Caco-2 (cell line): ENCODE measurements at regions of chr10 and their contacts with region 1.

Region 1: DNA sequence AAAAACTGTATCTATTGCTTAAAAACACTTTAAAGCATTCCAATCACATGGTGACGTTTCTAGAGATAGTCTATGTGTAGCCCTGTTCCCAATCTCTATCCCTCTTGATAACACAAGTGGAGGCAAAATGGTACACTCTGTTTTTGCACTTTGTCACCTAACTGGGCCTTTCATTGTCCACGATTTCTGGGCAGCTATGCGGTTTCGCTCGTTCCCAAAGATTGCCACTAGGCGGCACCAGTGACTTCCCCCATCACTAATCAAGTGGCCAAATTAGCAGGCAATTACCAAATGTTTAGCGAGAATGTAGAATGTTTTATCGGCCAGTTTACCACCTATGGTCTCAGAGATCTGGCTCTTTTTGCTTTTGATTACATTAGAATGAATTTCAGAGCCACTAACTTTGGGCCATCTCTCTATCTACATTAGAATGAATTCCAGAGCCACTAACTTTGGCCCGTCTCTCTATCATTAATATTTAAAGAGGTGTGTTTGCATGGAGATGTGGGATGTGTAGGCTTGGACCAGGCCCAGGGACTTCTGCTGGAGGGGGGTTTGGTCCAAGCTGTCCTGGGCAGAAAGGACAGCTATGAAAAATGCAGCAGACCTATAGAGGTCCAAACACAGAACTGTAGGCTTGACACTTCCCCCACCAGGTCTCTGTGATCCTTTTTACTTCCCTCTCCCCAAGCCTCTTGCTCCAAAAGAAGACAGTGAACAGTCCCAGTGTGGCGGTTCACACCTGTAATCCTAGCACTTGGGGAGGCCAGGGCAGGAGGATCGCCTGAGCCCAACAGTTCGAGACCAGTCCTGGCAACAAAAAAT is 90.1 kb downstream of the EPC1 start:
- DNase-seq: peak; percentile 54 to 66
- H3K4me3 ChIP-seq: no peak overlapping the region
- H3K4me3 Mint-ChIP-seq: no peak overlapping the region
- H3K27ac Mint-ChIP-seq: no peak overlapping the region
- H3K4me1 ChIP-seq: peaks cover 35% of the 10 kb centered on the region
- H3K4me1 Mint-ChIP-seq: peaks cover 26% of the 10 kb centered on the region
- H3K27me3 ChIP-seq: no peaks in the 10 kb centered on the region
- H3K27me3 Mint-ChIP-seq: no peaks in the 10 kb centered on the region
- CTCF ChIP-seq: peak; percentile 83 to 94

Region 2: DNA sequence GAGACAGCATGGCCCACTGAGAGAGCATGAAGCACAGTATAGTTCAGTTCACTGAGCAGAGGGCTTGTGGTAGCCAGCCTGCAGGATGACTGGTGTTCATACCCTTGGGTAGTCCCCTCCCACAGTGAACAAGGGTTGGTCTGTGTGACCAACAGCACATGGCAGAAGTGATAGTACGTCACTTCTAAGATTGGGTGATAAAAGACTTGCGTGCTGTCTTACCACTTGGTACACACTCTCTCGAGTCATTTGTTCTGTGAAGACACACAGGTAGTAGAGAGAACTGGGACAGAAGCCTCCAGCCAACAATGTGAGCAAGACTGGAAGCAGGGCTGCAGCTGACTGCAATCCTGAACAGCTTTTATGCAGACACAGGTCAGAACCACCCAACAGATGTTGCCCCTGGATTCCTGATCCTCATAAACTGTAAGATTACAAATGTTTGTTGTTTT is 75.5 kb after region 1 on chr10:
- CTCF ChIA-PET with region 1: interaction called, 11 read pairs
- POLR2A ChIA-PET with region 1: no interaction called
- intact Hi-C with region 1: no loop called
- DNase-seq: peak in 1 of 2 experiments; percentile 29
- H3K4me3 ChIP-seq: no peak overlapping the region
- H3K4me3 Mint-ChIP-seq: no peak overlapping the region
- H3K27ac Mint-ChIP-seq: no peak overlapping the region
- H3K4me1 ChIP-seq: peaks cover 36% of the 10 kb centered on the region
- H3K4me1 Mint-ChIP-seq: peaks cover 35% of the 10 kb centered on the region
- H3K27me3 ChIP-seq: no peaks in the 10 kb centered on the region
- H3K27me3 Mint-ChIP-seq: no peaks in the 10 kb centered on the region
- CTCF ChIP-seq: no peak

Region 3: GRCh38 chr10:32367793-32368453 is 111.1 kb after region 1 on chr10:
- CTCF ChIA-PET with region 1: interaction called, 4 read pairs
- POLR2A ChIA-PET with region 1: no interaction called
- intact Hi-C with region 1: loop called (anchors 1 kb)
- DNase-seq: peak; percentile 75 to 81
- H3K4me3 ChIP-seq: no peak overlapping the region
- H3K4me3 Mint-ChIP-seq: peak overlapping the region; percentile 22
- H3K27ac Mint-ChIP-seq: no peak overlapping the region
- H3K4me1 ChIP-seq: no peaks in the 10 kb centered on the region; the same call in 1 of the 2 replicates
- H3K4me1 Mint-ChIP-seq: peaks cover 11% of the 10 kb centered on the region
- H3K27me3 ChIP-seq: no peaks in the 10 kb centered on the region
- H3K27me3 Mint-ChIP-seq: no peaks in the 10 kb centered on the region
- CTCF ChIP-seq: peak; percentile 91 to 93